ENCODE measurements at regions of chr9 and their contacts with region 1.

Region 1: DNA sequence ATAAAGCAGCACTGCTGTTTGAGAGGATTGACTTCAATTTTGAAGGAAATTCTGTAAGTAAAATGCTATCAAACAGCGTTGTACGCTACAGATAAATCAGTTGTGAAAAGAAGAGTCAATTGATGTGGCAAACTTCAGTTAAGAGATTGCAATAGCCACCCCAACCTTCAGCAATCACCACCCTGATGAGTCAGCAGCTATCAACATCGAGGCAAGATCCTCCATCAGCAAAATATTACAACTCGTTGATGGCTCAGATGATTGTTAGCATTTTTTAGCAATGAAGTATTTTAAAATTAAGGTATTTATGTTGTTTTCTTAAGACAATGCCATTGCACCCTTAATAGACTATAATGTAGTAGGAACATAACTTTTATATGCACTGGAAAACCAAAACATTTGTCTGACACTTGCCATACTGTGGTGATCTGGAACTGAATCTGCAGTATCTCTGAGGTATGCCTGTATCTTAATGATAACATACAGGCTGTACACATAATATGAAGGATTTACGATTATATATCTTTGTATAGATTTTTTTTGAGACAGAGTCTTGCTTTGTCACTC is 47.5 kb downstream of the VPS13A start:
- DNase-seq: no peak
- H3K4me3 Mint-ChIP-seq: no peak overlapping the region
- H3K27ac Mint-ChIP-seq: no peak overlapping the region
- H3K4me1 Mint-ChIP-seq: no peaks in the 10 kb centered on the region
- H3K27me3 Mint-ChIP-seq: no peaks in the 10 kb centered on the region
- CTCF ChIP-seq: no peak

Region 2: GRCh38 chr9:76537150-76537646 is 687.6 kb before region 1 on chr9:
- CTCF ChIA-PET with region 1: no interaction called
- intact Hi-C with region 1: no loop called
- DNase-seq: no peak
- H3K4me3 Mint-ChIP-seq: no peak overlapping the region
- H3K27ac Mint-ChIP-seq: no peak overlapping the region
- H3K4me1 Mint-ChIP-seq: peaks cover 8% of the 10 kb centered on the region
- H3K27me3 Mint-ChIP-seq: no peaks in the 10 kb centered on the region
- CTCF ChIP-seq: no peak

Region 3: DNA sequence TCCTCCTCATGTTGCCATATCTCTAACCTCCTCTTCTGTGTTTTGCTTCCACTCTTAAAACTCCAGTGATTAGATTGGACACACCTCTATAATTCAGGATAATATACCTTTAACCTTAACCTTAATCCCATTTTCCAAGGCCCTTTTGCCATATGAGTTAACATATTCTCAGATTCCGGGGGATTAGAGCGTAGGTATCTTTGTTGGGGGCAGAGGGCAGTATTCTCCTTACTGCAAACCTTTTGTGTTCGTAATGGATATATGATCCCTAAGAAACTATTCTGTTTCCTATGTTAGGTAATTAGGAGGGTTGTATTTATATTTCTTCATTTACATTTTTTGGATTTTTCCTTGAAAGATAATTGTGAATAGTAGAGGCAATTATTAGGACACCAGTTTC is 52.0 kb after region 1 on chr9:
- CTCF ChIA-PET with region 1: no interaction called
- intact Hi-C with region 1: loop called (anchors 5 kb)
- DNase-seq: no peak
- H3K4me3 Mint-ChIP-seq: no peak overlapping the region
- H3K27ac Mint-ChIP-seq: no peak overlapping the region
- H3K4me1 Mint-ChIP-seq: no peaks in the 10 kb centered on the region
- H3K27me3 Mint-ChIP-seq: no peaks in the 10 kb centered on the region
- CTCF ChIP-seq: no peak

Region 4: GRCh38 chr9:77944556-77945243 is 719.9 kb after region 1 on chr9:
- CTCF ChIA-PET with region 1: no interaction called
- intact Hi-C with region 1: no loop called
- DNase-seq: no peak
- H3K4me3 Mint-ChIP-seq: no peak overlapping the region
- H3K27ac Mint-ChIP-seq: no peak overlapping the region
- H3K4me1 Mint-ChIP-seq: peaks cover 31% of the 10 kb centered on the region
- H3K27me3 Mint-ChIP-seq: no peaks in the 10 kb centered on the region
- CTCF ChIP-seq: no peak

Measured in Calu3 (cell line).